Activated CD4-positive, alpha-beta T cell treated with anti-CD3 and anti-CD28 coated beads for 36 hours (primary cell): ENCODE measurements at regions of chr11 and their contacts with region 1.

Region 1: GRCh38 chr11:67118801-67119584 is at the start of gene KDM2A:
- DNase-seq: peak; percentile 100
- ATAC-seq: peak; percentile 85
- H3K4me3 Mint-ChIP-seq: peak within 1 kb of the TSS; percentile 98
- H3K27ac Mint-ChIP-seq: peak within 1 kb of the TSS; percentile 83
- H3K4me1 Mint-ChIP-seq: peaks cover 28% of the 10 kb centered on the region
- H3K27me3 Mint-ChIP-seq: no peaks in the 10 kb centered on the region
- total RNA-seq, gene KDM2A: 74.8 to 89.7 TPM

Region 2: DNA sequence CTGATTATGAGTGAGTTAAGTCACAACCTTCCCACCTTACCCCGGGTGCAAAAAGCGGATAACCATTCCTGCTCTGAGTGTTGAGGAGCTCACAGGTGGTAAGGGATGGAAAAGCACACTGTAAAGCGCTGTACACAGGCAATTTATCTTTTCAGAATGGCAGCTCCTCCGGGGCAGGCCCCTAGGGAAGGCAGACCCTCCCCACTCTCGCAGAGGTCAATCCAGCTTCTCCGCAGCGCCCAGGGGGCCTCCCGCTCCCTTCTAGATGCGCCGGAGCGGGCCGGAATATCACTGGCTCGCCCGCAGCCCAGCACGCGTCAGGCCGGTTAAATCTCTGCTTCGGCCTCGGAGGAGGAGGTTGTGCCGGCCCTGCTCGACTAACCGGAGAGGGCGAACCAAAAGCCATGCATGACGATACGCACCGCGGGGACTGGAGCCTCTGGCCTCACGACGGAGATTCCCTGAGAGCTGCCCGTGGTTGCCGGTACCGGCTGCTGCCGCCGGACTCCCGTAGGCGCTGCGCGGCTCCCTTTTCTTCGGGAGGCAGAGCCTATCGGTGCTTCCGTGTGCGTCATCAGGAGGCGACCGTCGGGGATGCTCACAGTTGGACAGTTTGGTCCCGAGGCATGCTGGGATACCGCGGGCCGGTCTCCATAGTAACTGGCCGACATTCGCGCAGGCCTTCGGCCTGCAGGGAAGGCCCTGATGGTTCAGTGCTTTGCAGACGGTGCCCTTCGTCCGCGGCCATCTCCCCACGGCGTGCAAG is 774.3 kb before region 1 on chr11 and contains the start of gene BRMS1:
- CTCF ChIA-PET with region 1: no interaction called
- POLR2A ChIA-PET with region 1: no interaction called
- intact Hi-C with region 1: loop called in 1 of 2 experiments (anchors 2 kb)
- DNase-seq: peak; percentile 98
- ATAC-seq: peak; percentile 80
- H3K4me3 Mint-ChIP-seq: peak within 1 kb of the TSS; percentile 93
- H3K27ac Mint-ChIP-seq: peak within 1 kb of the TSS; percentile 90
- H3K4me1 Mint-ChIP-seq: peaks cover 45% of the 10 kb centered on the region
- H3K27me3 Mint-ChIP-seq: peaks cover 3% of the 10 kb centered on the region
- total RNA-seq, gene BRMS1: 29.2 to 30.2 TPM

Region 3: GRCh38 chr11:66592457-66593302 is 526.3 kb before region 1 on chr11 and contains the starts of genes CCDC87 and CCS:
- CTCF ChIA-PET with region 1: no interaction called
- POLR2A ChIA-PET with region 1: no interaction called
- intact Hi-C with region 1: loop called in 1 of 2 experiments (anchors 1 kb)
- DNase-seq: peak; percentile 99
- ATAC-seq: peak; percentile 100
- H3K4me3 Mint-ChIP-seq: peak within 1 kb of the TSS; percentile 93
- H3K27ac Mint-ChIP-seq: peak within 1 kb of the TSS; percentile 98
- H3K4me1 Mint-ChIP-seq: peaks cover 19% of the 10 kb centered on the region
- H3K27me3 Mint-ChIP-seq: no peaks in the 10 kb centered on the region
- total RNA-seq, gene CCDC87: 0.09 to 0.14 TPM
- total RNA-seq, gene CCS: 16.3 to 24.0 TPM

Region 4: DNA sequence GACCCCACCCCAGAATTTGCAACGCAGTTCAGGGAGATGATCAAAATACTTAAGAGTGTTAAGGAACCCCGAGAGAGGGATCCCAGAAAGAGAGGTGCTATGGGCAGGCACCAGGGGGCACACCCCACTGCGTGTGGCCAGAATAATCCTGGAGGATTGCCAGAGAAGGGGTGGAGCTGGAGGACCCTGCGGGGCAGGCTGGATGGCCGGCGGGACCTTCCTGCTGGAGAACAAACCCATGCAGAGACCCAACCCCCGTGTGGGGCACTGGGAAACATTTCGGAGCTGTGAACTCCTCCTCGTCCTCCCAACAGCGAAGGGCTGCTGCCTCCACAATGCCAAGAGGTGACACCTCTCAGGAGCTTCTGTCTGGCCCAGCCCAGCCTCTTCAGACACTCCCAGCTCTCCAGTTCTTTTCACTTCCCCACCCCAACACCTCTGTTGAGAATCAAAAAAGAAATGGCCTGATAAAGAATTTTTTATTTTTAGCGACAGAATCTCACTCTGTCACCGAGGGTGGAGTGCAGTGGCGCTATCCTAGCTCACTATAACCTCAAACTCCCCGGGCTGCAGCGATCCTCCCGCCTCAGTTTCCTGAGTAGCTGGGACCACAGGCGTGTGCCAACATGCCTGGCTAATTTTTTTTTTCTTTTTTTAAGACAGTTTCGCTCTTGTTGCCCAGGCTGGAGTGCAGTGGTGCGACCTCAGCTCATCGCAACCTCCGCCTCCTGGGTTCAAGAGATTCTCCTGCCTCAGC is 36.8 kb before region 1 on chr11:
- CTCF ChIA-PET with region 1: interaction called, 5 read pairs
- POLR2A ChIA-PET with region 1: no interaction called
- intact Hi-C with region 1: loop called (anchors 1 to 2 kb)
- DNase-seq: no peak
- ATAC-seq: no peak
- H3K4me3 Mint-ChIP-seq: no peak overlapping the region
- H3K27ac Mint-ChIP-seq: no peak overlapping the region
- H3K4me1 Mint-ChIP-seq: peaks cover 19% of the 10 kb centered on the region
- H3K27me3 Mint-ChIP-seq: peaks cover 5% of the 10 kb centered on the region

Region 5: GRCh38 chr11:67239783-67240575 is 121.0 kb after region 1 on chr11:
- CTCF ChIA-PET with region 1: no interaction called
- POLR2A ChIA-PET with region 1: interaction called, 6 read pairs
- intact Hi-C with region 1: loop called (anchors 1 to 5 kb)
- DNase-seq: peak; percentile 98
- ATAC-seq: peak; percentile 94
- H3K4me3 Mint-ChIP-seq: peak overlapping the region; percentile 98
- H3K27ac Mint-ChIP-seq: peak overlapping the region; percentile 99
- H3K4me1 Mint-ChIP-seq: peaks cover 43% of the 10 kb centered on the region
- H3K27me3 Mint-ChIP-seq: no peaks in the 10 kb centered on the region

Region 6: GRCh38 chr11:67345920-67346799 is 227.2 kb after region 1 on chr11:
- CTCF ChIA-PET with region 1: no interaction called
- POLR2A ChIA-PET with region 1: no interaction called
- intact Hi-C with region 1: no loop called
- DNase-seq: peak; percentile 45
- ATAC-seq: peak; percentile 77
- H3K4me3 Mint-ChIP-seq: no peak overlapping the region
- H3K27ac Mint-ChIP-seq: peak overlapping the region; percentile 89
- H3K4me1 Mint-ChIP-seq: peaks cover 55% of the 10 kb centered on the region
- H3K27me3 Mint-ChIP-seq: no peaks in the 10 kb centered on the region

Region 7: GRCh38 chr11:67428052-67428914 is 309.3 kb after region 1 on chr11 and contains the start of gene RPS6KB2:
- CTCF ChIA-PET with region 1: no interaction called
- POLR2A ChIA-PET with region 1: no interaction called
- intact Hi-C with region 1: loop called in 1 of 2 experiments (anchors 2 kb)
- DNase-seq: peak; percentile 99
- ATAC-seq: peak; percentile 81
- H3K4me3 Mint-ChIP-seq: peak within 1 kb of the TSS; percentile 90
- H3K27ac Mint-ChIP-seq: peak within 1 kb of the TSS; percentile 98
- H3K4me1 Mint-ChIP-seq: peaks cover 37% of the 10 kb centered on the region
- H3K27me3 Mint-ChIP-seq: no peaks in the 10 kb centered on the region
- total RNA-seq, gene RPS6KB2: 53.4 to 57.2 TPM